ENCODE measurements at regions of chr7 and their contacts with region 1.

Region 1: DNA sequence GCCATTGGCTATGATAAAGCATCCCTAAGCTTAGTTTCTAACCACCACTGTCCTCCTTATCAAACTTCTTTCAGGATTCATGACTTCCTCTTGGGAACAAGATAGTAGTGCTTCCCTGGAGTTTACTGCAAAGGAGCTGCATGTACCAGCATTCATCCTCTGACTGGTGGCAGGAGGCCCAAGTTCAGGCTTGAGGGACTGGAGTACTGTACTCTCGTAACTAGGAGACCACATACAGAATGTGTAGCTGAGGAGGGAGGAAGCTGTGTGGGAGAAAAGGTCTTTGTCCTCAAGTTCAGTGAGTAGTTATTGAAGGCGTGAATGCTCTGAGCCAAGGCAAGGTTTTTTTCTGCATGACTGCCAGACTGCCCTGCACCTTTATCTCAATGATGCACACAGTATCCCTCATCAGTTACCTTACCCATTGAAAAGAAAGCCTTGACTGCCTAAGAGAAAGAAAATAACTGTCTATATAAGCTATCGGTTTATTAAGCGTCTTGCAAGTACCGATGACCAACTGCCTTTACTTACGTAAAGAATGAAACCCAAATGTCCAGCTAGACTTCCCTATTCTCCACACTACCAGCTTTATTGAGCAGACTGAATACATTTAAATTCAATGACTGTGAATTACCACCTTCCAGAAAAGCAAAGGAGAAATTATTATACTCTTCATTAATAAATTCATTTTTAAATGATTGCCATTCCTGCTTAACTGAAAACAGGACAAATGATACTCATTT is 12.8 kb downstream of the SCRN1 start:
- DNase-seq: no peak
- ATAC-seq: no peak
- H3K4me3 ChIP-seq: no peak overlapping the region
- H3K27ac ChIP-seq: no peak overlapping the region
- H3K4me1 ChIP-seq: peaks cover 3% of the 10 kb centered on the region; the same call in 1 of the 2 replicates
- H3K27me3 ChIP-seq: no peaks in the 10 kb centered on the region
- CTCF ChIP-seq: no peak
- EP300 ChIP-seq: no peak
- POLR2A ChIP-seq: no peak
- RAD21 ChIP-seq: no peak

Region 2: GRCh38 chr7:29955799-29956486 is 20.9 kb before region 1 on chr7:
- CTCF ChIA-PET with region 1: interaction called, 15 read pairs
- POLR2A ChIA-PET with region 1: no interaction called
- RAD21 ChIA-PET with region 1: no interaction called
- SMC1A ChIA-PET with region 1: interaction called, 3 read pairs
- in situ Hi-C with region 1: no loop called
- intact Hi-C with region 1: no loop called
- DNase-seq: no peak
- ATAC-seq: peak; percentile 83
- H3K4me3 ChIP-seq: no peak overlapping the region
- H3K27ac ChIP-seq: peak overlapping the region; percentile 4
- H3K4me1 ChIP-seq: peaks cover 17% of the 10 kb centered on the region
- H3K27me3 ChIP-seq: no peaks in the 10 kb centered on the region
- CTCF ChIP-seq: no peak
- EP300 ChIP-seq: no peak
- POLR2A ChIP-seq: no peak
- RAD21 ChIP-seq: peak; percentile 33

Region 3: GRCh38 chr7:30168835-30169573 is 192.2 kb after region 1 on chr7:
- CTCF ChIA-PET with region 1: no interaction called
- POLR2A ChIA-PET with region 1: no interaction called
- RAD21 ChIA-PET with region 1: no interaction called
- SMC1A ChIA-PET with region 1: no interaction called
- in situ Hi-C with region 1: no loop called
- intact Hi-C with region 1: no loop called
- DNase-seq: no peak
- ATAC-seq: no peak
- H3K4me3 ChIP-seq: no peak overlapping the region
- H3K27ac ChIP-seq: no peak overlapping the region
- H3K4me1 ChIP-seq: peaks cover 3% of the 10 kb centered on the region
- H3K27me3 ChIP-seq: no peaks in the 10 kb centered on the region
- CTCF ChIP-seq: no peak
- EP300 ChIP-seq: no peak
- POLR2A ChIP-seq: no peak
- RAD21 ChIP-seq: no peak

Measured in GM12878 (cell line).